ENCODE measurements at regions of chr11 and their contacts with region 1.

Region 1: DNA sequence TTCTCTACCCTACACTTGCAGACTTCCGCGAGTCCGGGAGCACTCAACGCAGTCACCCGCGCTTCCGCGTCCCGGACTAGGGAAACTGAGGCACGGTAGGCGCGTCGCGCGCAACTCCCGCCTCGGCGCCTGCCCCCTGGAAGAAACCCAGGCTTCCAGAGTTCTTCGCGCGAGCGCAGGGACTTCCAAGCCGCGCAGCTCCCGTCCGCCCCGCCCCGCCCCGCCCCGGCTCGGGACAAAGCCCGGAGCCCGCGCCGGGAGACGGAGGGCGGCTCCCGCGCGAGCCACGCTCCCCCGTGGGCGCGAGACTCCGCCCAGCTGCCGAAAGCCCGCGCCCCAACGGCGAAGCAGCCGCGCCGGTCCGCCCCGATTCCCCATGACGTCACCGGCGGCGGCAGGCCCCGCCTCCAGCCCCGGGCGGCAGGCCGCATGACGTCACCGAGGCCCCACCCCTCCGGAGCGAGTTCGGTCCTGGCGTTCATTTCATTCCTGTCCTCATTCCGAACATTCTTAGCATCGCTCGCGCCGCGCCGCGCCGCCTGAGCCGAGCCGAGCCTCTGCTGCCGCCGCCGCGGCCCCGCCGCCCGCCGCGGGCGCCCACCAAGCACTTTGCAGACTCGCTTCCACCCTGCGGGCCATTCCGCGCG is at the start of gene TEAD1:
- DNase-seq: peak; percentile 88
- H3K4me3 Mint-ChIP-seq: peak within 1 kb of the TSS; percentile 77
- H3K27ac Mint-ChIP-seq: no peak within 1 kb of the TSS
- H3K4me1 Mint-ChIP-seq: peaks cover 5% of the 10 kb centered on the region
- H3K27me3 Mint-ChIP-seq: peaks cover 72% of the 10 kb centered on the region
- total RNA-seq, gene TEAD1: 0.93 to 1.2 TPM

Region 2: GRCh38 chr11:12377824-12378593 is 296.0 kb before region 1 on chr11:
- CTCF ChIA-PET with region 1: no interaction called
- intact Hi-C with region 1: loop called (anchors 5 kb)
- DNase-seq: no peak
- H3K4me3 Mint-ChIP-seq: peak overlapping the region; percentile 71
- H3K27ac Mint-ChIP-seq: no peak overlapping the region
- H3K4me1 Mint-ChIP-seq: peaks cover 10% of the 10 kb centered on the region
- H3K27me3 Mint-ChIP-seq: peaks cover 8% of the 10 kb centered on the region

Region 3: DNA sequence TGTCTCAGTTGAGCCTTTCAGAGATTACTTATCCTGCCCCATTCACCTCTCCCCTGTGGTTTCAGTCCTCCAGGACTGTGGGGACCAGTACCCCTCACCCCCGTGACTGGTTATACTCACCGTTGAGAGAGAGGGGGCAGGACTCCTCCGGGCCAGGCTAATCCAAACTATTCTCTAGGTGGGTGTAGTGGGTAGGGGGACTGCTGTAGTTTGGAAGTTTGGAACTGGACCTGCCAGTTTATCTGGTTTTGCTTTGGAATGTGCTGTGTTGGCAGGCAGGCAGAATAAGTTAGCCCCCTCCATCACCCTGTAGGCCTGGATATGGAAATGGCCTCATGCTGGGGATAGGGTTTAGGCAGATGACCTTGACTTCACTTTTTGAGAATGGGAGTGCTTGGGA is 13.7 kb after region 1 on chr11:
- CTCF ChIA-PET with region 1: no interaction called
- intact Hi-C with region 1: loop called (anchors 1 kb)
- DNase-seq: no peak
- H3K4me3 Mint-ChIP-seq: no peak overlapping the region
- H3K27ac Mint-ChIP-seq: no peak overlapping the region
- H3K4me1 Mint-ChIP-seq: peaks cover 16% of the 10 kb centered on the region
- H3K27me3 Mint-ChIP-seq: peaks cover 70% of the 10 kb centered on the region

Region 4: DNA sequence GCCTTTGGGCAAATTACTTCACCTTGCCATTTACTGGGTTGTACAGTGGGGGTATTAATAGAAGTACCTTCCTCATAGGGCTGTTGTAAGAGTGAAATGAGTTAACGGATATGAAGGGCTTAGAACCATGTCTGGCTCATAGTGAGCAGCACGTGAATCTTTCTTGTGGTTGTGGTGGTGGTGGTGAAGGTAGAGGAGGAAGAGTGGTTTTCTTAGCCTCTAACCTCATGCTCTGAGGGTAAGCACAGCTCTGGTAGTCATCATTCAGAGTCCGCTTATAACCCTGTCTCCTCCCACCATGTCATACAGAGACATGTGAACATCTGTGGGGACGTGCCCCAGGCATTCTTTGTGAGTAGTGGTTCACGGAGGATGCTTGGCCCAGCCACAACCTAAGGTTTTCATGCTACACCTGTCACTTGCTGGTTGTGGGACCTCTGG is 43.8 kb after region 1 on chr11:
- CTCF ChIA-PET with region 1: no interaction called
- intact Hi-C with region 1: loop called (anchors 1 kb)
- DNase-seq: peak; percentile 88
- H3K4me3 Mint-ChIP-seq: no peak overlapping the region
- H3K27ac Mint-ChIP-seq: no peak overlapping the region
- H3K4me1 Mint-ChIP-seq: peaks cover 15% of the 10 kb centered on the region
- H3K27me3 Mint-ChIP-seq: peaks cover 63% of the 10 kb centered on the region

Region 5: GRCh38 chr11:12813371-12814225 is 139.6 kb after region 1 on chr11:
- CTCF ChIA-PET with region 1: no interaction called
- intact Hi-C with region 1: loop called (anchors 5 kb)
- DNase-seq: no peak
- H3K4me3 Mint-ChIP-seq: no peak overlapping the region
- H3K27ac Mint-ChIP-seq: no peak overlapping the region
- H3K4me1 Mint-ChIP-seq: peaks cover 4% of the 10 kb centered on the region
- H3K27me3 Mint-ChIP-seq: peaks cover 50% of the 10 kb centered on the region

Region 6: DNA sequence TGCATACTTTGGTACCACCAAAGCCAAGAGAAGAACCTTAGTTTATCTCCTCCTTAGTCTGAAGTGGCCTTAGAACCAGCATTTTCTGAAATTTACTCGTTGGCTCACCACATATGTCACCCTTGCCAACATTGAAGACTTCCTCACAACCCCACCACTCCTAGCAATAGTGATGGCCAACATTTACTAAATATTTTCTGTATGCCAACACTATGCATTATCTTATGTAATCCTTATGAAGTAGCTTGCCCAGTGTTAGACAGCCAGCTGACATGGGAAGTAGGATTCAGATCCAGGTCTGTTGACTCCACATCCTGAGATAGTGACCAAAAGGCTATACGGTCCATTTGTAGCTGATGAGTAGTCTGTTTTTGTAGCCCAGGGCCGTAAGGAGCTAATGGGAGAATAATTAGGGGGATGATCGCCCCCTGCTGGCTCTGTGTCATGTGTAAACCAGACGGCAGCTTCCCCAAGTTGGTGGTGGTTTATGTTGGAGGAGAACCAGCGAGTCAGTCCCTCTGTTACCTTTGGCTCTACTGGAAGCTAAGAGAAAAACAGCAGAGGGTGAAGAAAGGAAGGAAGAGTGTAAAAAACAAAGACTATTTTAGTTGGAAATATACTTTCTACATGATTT is 214.6 kb after region 1 on chr11:
- CTCF ChIA-PET with region 1: interaction called, 3 read pairs
- intact Hi-C with region 1: loop called (anchors 2 kb)
- DNase-seq: peak; percentile 84
- H3K4me3 Mint-ChIP-seq: no peak overlapping the region
- H3K27ac Mint-ChIP-seq: no peak overlapping the region
- H3K4me1 Mint-ChIP-seq: no peaks in the 10 kb centered on the region
- H3K27me3 Mint-ChIP-seq: peaks cover 2% of the 10 kb centered on the region

Region 7: DNA sequence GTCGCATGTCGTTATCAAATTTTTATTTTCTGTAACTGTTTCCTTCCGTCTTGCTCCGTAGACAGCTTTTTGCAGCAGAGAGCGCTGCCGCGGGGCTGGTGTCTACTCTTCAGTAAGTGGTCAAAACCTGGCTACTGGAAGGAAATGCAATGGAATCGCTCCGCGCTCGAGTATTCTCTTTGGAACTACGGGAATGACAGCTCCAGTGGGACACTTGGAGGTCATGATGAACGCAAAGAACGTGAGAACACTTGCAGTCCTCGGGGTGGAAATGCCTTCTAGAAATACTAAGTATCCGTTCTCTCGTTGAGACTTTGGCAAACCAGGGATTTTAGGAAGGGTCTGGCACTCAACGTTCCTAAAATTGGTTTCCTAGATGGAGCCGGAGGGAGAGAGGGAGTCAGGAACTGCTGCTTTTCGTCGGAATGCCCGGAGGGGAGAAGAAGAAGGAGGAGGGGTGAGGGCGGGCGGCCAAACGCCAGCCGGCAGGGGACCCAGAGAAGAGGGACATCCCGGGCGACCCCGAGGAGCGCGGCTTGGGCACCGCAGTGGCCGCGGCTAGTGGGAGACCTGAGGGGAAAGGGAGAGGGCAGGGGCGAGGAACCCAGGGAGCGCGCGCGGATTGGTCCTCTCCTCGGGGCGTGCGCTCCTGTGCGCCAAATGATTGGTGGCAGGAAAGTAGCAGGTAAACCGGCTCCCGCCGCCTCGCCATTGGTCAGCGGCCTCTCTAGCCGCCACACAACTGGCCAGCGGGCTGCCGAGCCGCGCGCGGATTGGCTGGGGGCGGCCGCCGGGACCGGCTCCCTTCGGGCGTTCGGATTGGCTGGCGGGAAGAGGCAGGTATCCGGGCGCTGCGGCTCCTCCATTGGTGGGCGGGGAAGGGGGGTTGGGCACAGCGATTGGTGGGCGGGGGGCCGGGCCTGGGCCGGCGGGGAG is 603.1 kb after region 1 on chr11:
- CTCF ChIA-PET with region 1: no interaction called
- intact Hi-C with region 1: loop called (anchors 5 kb)
- DNase-seq: peak; percentile 98
- H3K4me3 Mint-ChIP-seq: peak overlapping the region; percentile 94
- H3K27ac Mint-ChIP-seq: peak overlapping the region; percentile 74
- H3K4me1 Mint-ChIP-seq: peaks cover 42% of the 10 kb centered on the region
- H3K27me3 Mint-ChIP-seq: no peaks in the 10 kb centered on the region

Measured in activated naive CD4-positive, alpha-beta T cell treated with anti-CD3 and anti-CD28 coated beads for 36 hours (primary cell).